PC-9 (cell line): ENCODE measurements at regions of chr17 and their contacts with region 1.

Region 1: GRCh38 chr17:77331301-77331864 is 190.6 kb downstream of the SEC14L1 start:
- DNase-seq: peak; percentile 67 to 83
- H3K4me3 ChIP-seq: no peak overlapping the region; the same call in 1 of the 2 replicates
- H3K27ac ChIP-seq: peak overlapping the region; percentile 78
- H3K4me1 ChIP-seq: peaks cover 31% of the 10 kb centered on the region
- H3K27me3 ChIP-seq: no peaks in the 10 kb centered on the region
- CTCF ChIP-seq: peak; percentile 81

Region 2: GRCh38 chr17:77235370-77235941 is 95.9 kb before region 1 on chr17:
- CTCF ChIA-PET with region 1: no interaction called
- POLR2A ChIA-PET with region 1: no interaction called
- intact Hi-C with region 1: no loop called
- DNase-seq: no peak
- H3K4me3 ChIP-seq: no peak overlapping the region
- H3K27ac ChIP-seq: no peak overlapping the region
- H3K4me1 ChIP-seq: no peaks in the 10 kb centered on the region
- H3K27me3 ChIP-seq: no peaks in the 10 kb centered on the region
- CTCF ChIP-seq: no peak

Region 3: DNA sequence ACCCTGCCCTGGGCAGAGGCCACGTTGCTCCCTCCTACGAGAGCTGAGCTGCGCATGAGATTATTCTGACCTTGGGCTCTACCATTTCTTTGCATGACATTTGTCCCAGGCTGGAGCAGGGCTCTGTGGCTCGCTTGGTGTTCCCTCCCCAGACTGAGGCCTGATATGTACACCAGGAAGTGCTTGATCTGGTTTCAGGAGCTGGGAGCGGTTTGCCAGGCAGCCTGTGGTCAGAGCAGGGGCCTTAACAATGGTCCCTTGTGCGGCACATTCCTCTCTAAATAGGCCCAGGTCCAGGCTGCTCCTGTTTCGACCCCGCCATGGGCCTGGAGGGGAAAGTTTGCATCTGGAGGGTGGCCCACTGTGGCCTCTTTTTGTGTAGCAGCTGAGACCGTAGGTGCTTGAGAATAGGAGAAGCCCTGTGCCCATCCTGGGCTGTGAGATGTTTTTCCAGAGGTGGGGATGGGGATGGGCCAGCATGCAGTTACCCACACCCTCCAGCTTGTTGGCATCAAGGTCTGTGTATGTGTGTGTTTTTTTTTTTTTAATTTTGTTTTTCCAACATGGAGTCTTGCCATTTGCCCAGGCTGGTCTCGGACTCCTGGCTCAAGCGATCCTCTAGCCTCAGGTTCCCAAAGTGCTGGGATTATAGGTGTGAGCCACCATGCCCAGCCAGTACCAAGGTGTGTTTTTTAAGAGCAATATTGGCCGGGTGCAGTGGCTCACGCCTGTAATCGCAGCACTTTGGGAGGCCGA is 63.3 kb after region 1 on chr17:
- CTCF ChIA-PET with region 1: no interaction called
- POLR2A ChIA-PET with region 1: no interaction called
- intact Hi-C with region 1: loop called (anchors 2 kb)
- DNase-seq: peak in 1 of 2 experiments; percentile 67
- H3K4me3 ChIP-seq: no peak overlapping the region
- H3K27ac ChIP-seq: no peak overlapping the region
- H3K4me1 ChIP-seq: no peaks in the 10 kb centered on the region
- H3K27me3 ChIP-seq: no peaks in the 10 kb centered on the region
- CTCF ChIP-seq: no peak

Region 4: DNA sequence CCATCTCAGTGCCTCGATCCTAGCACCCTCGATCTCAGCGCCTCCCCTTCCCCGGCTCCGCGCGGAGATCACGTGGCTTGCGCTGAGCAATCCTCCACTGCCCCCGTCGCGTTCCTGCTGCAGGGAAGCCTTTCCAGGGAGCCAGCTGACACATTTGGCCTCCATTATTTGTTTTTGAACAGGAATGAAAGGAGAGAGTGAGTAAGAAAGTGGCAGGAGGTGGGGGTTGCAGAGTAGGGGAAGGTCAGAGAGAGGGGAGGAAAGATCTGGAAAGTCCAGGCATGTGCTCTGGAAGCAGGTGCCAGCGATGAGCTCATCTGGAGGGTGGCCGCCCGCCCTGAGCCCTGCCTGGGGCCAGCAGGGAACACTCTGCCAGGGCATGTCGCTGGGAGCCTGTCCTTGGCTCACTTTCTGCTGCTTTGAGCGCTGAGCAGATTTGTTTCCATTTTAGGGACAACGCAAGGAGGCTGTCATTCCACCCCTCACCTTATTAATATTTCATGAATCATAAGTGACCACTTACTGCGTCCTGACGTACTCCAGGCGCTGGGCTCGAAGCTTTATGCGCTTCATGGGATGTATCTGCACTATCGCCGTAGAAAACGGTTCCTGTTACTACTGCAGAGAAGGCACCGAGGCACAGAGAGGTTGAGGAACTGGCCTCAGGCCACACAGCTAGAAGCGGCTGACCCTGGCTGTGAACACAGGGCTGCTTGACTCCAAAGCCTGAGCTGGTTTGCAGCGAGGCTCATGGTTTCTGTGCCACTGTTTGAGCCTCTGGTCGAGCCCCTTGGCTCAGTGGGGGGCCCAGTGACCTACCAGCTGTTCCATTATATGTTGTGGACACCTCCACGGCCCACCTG is 92.4 kb after region 1 on chr17:
- CTCF ChIA-PET with region 1: no interaction called
- POLR2A ChIA-PET with region 1: no interaction called
- intact Hi-C with region 1: loop called (anchors 2 kb)
- DNase-seq: no peak
- H3K4me3 ChIP-seq: no peak overlapping the region
- H3K27ac ChIP-seq: no peak overlapping the region
- H3K4me1 ChIP-seq: peaks cover 28% of the 10 kb centered on the region
- H3K27me3 ChIP-seq: no peaks in the 10 kb centered on the region
- CTCF ChIP-seq: no peak

Region 5: GRCh38 chr17:77471984-77472461 is 140.6 kb after region 1 on chr17:
- CTCF ChIA-PET with region 1: no interaction called
- POLR2A ChIA-PET with region 1: no interaction called
- intact Hi-C with region 1: loop called (anchors 5 kb)
- DNase-seq: peak in 1 of 2 experiments; percentile 27
- H3K4me3 ChIP-seq: no peak overlapping the region
- H3K27ac ChIP-seq: no peak overlapping the region
- H3K4me1 ChIP-seq: peaks cover 6% of the 10 kb centered on the region; the same call in 1 of the 2 replicates
- H3K27me3 ChIP-seq: no peaks in the 10 kb centered on the region
- CTCF ChIP-seq: no peak

Region 6: DNA sequence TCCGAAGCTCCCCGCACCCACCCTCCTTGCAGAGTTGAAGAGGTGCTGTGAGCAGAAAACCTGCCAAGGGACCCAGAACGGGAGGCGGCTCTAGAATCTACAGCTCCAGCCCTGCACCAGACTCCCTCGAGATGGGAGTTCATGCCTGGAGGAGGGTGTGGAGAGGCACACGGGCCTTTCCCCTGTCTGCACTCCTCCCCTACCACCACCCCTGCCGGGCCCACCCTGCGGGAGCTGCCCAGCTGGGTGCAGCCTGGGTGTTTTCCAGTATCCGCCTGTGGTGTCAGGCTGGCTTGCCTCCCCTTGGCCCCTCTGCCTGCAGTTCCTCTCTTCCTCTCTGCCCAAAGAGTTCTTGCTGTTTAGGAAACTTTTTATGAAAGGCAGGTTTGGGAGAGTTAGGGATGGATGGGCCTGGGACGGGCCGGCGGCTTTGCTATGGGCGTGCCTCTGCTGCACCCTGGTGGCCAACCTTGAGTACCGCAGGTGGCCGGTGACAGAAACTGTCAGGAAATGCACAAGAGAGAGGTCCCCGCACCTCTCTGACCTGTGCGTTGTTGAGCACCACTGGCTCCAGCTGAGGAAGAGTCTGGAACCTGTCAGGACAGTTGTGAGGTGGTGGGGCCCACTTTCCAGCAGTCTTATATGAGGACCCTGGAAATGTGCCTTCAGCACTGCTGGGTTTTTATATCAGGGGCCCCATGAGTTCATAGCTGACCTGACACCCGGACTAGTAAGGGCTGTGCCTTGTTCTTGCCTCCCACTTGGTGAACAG is 163.5 kb after region 1 on chr17:
- CTCF ChIA-PET with region 1: no interaction called
- POLR2A ChIA-PET with region 1: no interaction called
- intact Hi-C with region 1: loop called (anchors 1 kb)
- DNase-seq: peak; percentile 44 to 72
- H3K4me3 ChIP-seq: no peak overlapping the region
- H3K27ac ChIP-seq: no peak overlapping the region
- H3K4me1 ChIP-seq: no peaks in the 10 kb centered on the region
- H3K27me3 ChIP-seq: no peaks in the 10 kb centered on the region
- CTCF ChIP-seq: peak; percentile 94

Region 7: GRCh38 chr17:78013683-78014467 is 682.5 kb after region 1 on chr17:
- CTCF ChIA-PET with region 1: no interaction called
- POLR2A ChIA-PET with region 1: no interaction called
- intact Hi-C with region 1: loop called (anchors 10 kb)
- DNase-seq: peak; percentile 26 to 37
- H3K4me3 ChIP-seq: no peak overlapping the region
- H3K27ac ChIP-seq: no peak overlapping the region
- H3K4me1 ChIP-seq: no peaks in the 10 kb centered on the region
- H3K27me3 ChIP-seq: peaks cover 61% of the 10 kb centered on the region
- CTCF ChIP-seq: peak; percentile 75